Heart right ventricle (tissue), 16 donors: ENCODE measurements at regions of chr18 and their contacts with region 1.

Region 1: DNA sequence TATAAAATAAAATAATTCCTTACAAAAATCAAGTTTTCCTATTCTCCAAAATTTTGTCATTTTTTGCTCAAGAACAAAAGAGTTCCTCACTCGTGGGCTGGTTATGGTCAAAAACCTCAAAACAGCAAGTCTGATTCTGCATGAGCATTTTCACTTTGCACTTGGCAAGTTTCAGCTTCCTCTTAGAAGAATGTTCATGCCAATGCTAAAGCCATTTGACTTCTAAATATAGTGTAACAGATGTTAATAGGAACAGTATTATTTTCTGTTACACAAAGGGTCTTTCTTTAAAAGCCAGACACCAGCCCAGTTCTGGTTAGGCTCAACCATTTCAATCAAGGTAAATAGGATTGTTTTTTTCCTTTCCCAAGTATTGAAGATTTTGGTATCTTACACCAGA is 261.3 kb upstream of the CCDC68 start:
- DNase-seq: no peak
- ATAC-seq: peak in 6 of 8 donors; percentile 52 to 79 (median 66)
- H3K4me3 ChIP-seq: no peak overlapping the region
- H3K27ac ChIP-seq: peak overlapping the region in 5 of 10 donors; percentile 10 to 74 (median 45)
- H3K4me1 ChIP-seq: peaks cover 0 to 31% (median 12%) of the 10 kb centered on the region in 9 donors
- H3K27me3 ChIP-seq: no peaks in the 10 kb centered on the region
- CTCF ChIP-seq: no peak

Region 2: GRCh38 chr18:55110436-55110835 is 110.1 kb before region 1 on chr18:
- intact Hi-C with region 1: loop called in 4 of 10 experiments (anchors 5 to 10 kb)
- DNase-seq: peak; percentile 13 to 58
- ATAC-seq: peak; percentile 86 to 95 (median 93)
- H3K4me3 ChIP-seq: no peak overlapping the region
- H3K27ac ChIP-seq: peak overlapping the region; percentile 32 to 83 (median 71)
- H3K4me1 ChIP-seq: peaks cover 0 to 41% (median 11%) of the 10 kb centered on the region in 9 donors
- H3K27me3 ChIP-seq: no peaks in the 10 kb centered on the region
- CTCF ChIP-seq: no peak

Region 3: DNA sequence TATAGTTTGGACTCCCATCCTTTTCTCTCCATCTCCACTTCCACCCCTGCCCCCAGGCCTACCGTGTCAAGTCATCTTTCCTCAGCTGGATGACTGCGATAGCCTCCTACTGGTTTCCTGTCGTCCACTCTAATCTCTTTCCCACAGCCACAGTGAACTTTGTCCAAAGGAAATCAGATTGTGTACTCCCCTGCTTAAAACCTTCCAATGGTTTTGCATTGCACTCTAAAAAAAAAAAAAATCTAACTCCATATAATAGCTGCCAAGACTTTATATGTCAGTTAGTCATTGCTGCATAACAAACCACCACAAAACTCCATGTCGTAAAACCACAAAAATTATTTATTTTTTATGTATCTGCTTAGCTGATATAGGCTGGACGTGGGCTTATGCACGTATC is 101.1 kb before region 1 on chr18:
- intact Hi-C with region 1: loop called in 4 of 10 experiments (anchors 5 to 10 kb)
- DNase-seq: peak in 1 of 2 donors; percentile 19
- ATAC-seq: peak in 6 of 8 donors; percentile 22 to 78 (median 59)
- H3K4me3 ChIP-seq: no peak overlapping the region
- H3K27ac ChIP-seq: peak overlapping the region in 7 of 10 donors; percentile 9 to 73 (median 48)
- H3K4me1 ChIP-seq: peaks cover 0 to 44% (median 6%) of the 10 kb centered on the region in 9 donors
- H3K27me3 ChIP-seq: no peaks in the 10 kb centered on the region
- CTCF ChIP-seq: no peak

Region 4: DNA sequence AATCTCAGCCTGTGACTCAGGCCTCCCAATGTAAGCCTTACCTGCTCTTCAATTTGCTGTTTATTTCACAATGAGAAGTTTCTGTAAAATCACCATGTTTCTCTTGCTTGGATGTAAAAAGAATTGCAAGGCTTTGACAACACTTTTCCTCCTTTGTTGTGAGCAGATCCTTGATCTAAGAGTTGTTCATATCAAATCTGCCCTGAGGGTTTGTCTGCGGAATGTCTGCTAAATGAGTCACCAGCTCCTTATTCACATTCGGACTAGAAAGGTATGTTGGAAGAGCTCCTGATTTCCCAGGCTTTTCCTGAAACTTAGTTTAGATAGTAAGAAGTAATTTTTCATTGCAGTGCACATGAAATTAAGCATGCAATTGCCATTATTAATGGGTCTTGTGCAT is 635.7 kb after region 1 on chr18:
- intact Hi-C with region 1: loop called in 1 of 10 experiments (anchors 10 kb)
- DNase-seq: no peak
- ATAC-seq: no peak
- H3K4me3 ChIP-seq: no peak overlapping the region
- H3K27ac ChIP-seq: no peak overlapping the region
- H3K4me1 ChIP-seq: peaks cover 0 to 6% (median 0%) of the 10 kb centered on the region in 9 donors
- H3K27me3 ChIP-seq: no peaks in the 10 kb centered on the region
- CTCF ChIP-seq: no peak